ENCODE measurements at regions of chr17 and their contacts with region 1.

Region 1: DNA sequence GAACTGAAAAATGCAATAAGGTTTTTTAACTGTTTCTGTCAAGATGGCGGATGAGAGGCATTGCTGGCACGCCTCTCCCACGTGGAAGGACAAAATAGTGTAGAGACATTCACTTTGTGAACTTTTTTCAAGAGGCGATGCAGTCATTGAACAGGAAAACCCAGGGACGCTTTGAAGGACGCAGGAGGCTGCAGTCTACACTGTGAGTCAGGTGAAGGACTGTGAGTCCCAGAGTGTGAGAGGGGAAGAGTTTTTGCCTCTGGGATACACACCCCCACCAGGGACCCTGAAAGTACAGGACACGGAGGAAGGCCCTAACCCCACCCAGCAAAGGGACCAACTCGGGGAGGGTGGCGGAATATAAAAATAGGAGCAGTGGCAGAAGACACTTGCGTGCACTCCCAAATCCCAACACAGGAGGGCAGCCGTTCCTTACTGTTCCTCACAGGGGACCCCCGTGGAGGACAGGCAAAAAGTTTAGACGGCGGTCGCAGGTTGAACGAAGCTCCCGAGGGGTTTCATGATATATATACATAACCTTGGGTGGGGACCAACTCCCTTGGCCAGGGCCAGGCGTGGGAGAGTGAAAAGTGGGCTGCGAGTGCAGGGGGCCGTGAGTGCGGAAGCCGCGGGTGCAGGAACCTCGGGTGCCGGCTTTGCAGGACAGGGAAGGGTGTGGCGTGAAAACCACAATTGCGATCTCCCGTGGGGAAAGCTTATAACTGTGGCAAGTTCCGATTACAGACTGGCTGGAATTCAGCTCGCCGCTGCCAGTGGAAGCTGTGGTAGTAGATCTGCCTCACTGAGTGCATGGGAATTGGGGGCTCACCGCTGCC is 82.0 kb upstream of the ALOX12 start:
- DNase-seq: peak in 1 of 2 experiments; percentile 67
- H3K4me3 ChIP-seq: no peak overlapping the region
- H3K27ac ChIP-seq: no peak overlapping the region
- H3K4me1 ChIP-seq: peaks cover 4% of the 10 kb centered on the region
- H3K27me3 ChIP-seq: no peaks in the 10 kb centered on the region
- CTCF ChIP-seq: peak; percentile 94

Region 2: DNA sequence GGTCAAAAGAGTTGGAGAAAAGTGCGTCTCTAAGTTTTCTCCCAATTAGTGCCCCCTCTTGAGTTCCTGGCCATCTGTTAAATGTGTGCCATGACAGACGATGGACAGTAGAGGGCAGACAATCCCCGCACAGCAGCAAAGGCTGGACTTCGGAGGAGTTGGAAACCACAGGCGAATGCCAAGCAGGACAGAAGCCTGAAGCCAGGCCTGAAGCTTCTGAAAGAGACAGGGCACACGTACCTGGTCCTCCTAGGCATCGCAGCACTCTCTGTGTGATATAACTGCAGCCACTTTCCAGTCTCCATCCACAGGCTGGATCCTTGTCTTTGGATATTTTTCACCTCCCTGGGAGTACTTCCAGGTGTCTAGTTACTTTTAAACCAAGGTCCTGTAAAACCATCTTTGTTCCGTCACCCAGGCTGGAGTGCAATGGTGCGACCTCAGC is 247.7 kb before region 1 on chr17:
- CTCF ChIA-PET with region 1: no interaction called
- POLR2A ChIA-PET with region 1: interaction called, 4 read pairs
- intact Hi-C with region 1: loop called (anchors 1 kb)
- DNase-seq: peak; percentile 67 to 84
- H3K4me3 ChIP-seq: no peak overlapping the region
- H3K27ac ChIP-seq: no peak overlapping the region
- H3K4me1 ChIP-seq: peaks cover 37% of the 10 kb centered on the region
- H3K27me3 ChIP-seq: no peaks in the 10 kb centered on the region
- CTCF ChIP-seq: peak; percentile 96

Region 3: GRCh38 chr17:6843241-6843880 is 70.5 kb before region 1 on chr17:
- CTCF ChIA-PET with region 1: interaction called, 11 read pairs
- POLR2A ChIA-PET with region 1: no interaction called
- intact Hi-C with region 1: loop called (anchors 1 kb)
- DNase-seq: peak in 1 of 2 experiments; percentile 49
- H3K4me3 ChIP-seq: no peak overlapping the region
- H3K27ac ChIP-seq: no peak overlapping the region
- H3K4me1 ChIP-seq: no peaks in the 10 kb centered on the region
- H3K27me3 ChIP-seq: no peaks in the 10 kb centered on the region
- CTCF ChIP-seq: peak; percentile 78

Region 4: GRCh38 chr17:7021993-7022778 is 108.4 kb after region 1 on chr17:
- CTCF ChIA-PET with region 1: interaction called, 5 read pairs
- POLR2A ChIA-PET with region 1: no interaction called
- intact Hi-C with region 1: loop called (anchors 5 kb)
- DNase-seq: peak in 1 of 2 experiments; percentile 79
- H3K4me3 ChIP-seq: no peak overlapping the region; the same call in 1 of the 2 replicates
- H3K27ac ChIP-seq: no peak overlapping the region
- H3K4me1 ChIP-seq: 0 out of 2 replicates have a peak, but pooled peaks cover 4% of the 10 kb centered on the region
- H3K27me3 ChIP-seq: no peaks in the 10 kb centered on the region
- CTCF ChIP-seq: peak; percentile 94

Region 5: DNA sequence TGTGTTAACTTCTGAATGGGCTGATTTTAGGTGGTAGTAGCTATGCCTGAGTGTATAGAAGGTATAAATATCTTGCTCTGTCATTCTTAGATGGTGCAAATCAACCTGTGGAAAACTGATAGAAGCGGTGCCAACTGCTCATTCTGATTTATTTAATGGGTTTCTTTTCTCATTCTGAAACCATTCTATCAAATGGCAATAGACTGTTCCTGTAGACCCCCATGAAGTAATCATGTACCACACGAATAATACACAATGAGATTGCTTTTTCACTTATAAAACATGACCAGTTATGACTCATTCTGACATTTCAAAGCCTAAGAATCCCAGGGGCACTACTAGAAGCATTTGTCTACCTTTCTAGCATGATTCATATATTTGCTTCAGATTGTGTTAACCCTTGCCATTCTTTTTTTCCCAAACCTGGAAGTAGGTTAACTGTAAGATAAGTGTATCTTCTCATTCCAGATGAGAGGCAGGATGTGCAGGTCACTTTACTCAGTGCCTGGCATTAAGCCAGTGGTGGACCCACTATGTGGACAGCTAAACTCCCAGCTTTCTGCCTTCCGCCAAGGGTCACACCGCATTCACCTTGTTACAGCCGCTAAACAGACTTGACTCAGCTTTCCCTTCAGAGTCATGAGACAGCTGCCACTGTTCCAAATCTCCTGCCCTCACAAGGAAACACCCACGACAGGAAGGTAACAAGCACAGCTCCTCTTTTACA is 146.5 kb after region 1 on chr17:
- CTCF ChIA-PET with region 1: no interaction called
- POLR2A ChIA-PET with region 1: no interaction called
- intact Hi-C with region 1: no loop called
- DNase-seq: peak; percentile 73 to 94
- H3K4me3 ChIP-seq: no peak overlapping the region; the same call in 1 of the 2 replicates
- H3K27ac ChIP-seq: peak overlapping the region; percentile 93
- H3K4me1 ChIP-seq: peaks cover 36% of the 10 kb centered on the region
- H3K27me3 ChIP-seq: no peaks in the 10 kb centered on the region
- CTCF ChIP-seq: no peak

Region 6: GRCh38 chr17:7136266-7136877 is 222.5 kb after region 1 on chr17:
- CTCF ChIA-PET with region 1: no interaction called
- POLR2A ChIA-PET with region 1: no interaction called
- intact Hi-C with region 1: loop called (anchors 1 kb)
- DNase-seq: peak; percentile 42 to 70
- H3K4me3 ChIP-seq: peak overlapping the region; percentile 50
- H3K27ac ChIP-seq: no peak overlapping the region
- H3K4me1 ChIP-seq: peaks cover 16% of the 10 kb centered on the region
- H3K27me3 ChIP-seq: no peaks in the 10 kb centered on the region
- CTCF ChIP-seq: peak; percentile 98